Activated CD4-positive, alpha-beta memory T cell treated with anti-CD3 and anti-CD28 coated beads for 36 hours (primary cell): ENCODE measurements at regions of chr10 and their contacts with region 1.

Region 1: GRCh38 chr10:38010119-38010903 is at the start of gene ZNF33A:
- DNase-seq: peak; percentile 95
- H3K4me3 Mint-ChIP-seq: peak within 1 kb of the TSS; percentile 91
- H3K27ac Mint-ChIP-seq: peak within 1 kb of the TSS; percentile 99
- H3K4me1 Mint-ChIP-seq: peaks cover 29% of the 10 kb centered on the region
- H3K27me3 Mint-ChIP-seq: no peaks in the 10 kb centered on the region
- total RNA-seq, gene ZNF33A: 20.8 to 21.5 TPM

Region 2: DNA sequence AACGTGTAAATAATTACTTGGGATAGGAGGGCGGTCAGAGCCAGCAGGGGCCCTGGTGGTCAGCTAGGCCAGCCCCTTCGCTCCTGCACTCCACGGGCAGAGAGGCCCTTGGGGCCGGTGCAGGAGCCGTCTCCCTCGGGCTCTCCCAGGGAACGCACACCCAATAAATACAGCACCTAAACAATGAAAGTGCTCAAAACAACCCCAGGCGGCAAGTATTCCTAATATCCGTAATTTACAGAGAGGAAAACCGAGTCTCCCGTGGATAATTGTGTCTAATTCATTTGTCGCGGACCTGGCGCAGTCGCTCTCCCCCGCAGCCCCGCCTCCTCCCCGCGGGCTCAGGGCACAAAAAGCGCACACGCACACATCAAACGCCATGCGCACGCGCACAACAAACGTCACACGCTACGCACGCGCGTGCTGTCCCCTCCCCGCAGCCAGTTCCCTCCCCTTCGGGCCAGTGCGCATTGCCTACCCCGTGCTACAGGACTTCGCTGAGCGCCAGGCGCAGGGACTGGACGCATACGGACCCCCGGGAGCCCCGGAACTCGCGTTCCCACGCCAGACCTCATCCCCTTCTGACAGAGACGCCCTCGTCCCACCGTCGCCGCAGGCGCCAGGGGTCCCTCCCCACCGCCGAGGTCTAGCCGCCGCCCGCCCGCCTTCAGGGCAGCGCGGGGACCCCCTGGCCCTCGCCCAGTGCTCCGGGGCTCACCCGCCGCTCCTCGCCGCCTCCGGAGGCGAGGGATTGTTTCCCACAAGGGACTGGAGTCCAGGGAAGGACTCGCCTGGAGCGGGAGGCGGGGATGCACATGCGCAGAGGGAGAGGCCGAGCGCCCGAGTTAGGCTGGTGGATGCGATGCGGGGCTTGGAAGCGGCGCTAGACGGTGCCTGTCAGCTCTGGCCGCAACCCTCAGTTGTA is 152.8 kb before region 1 on chr10 and contains the start of gene ZNF248:
- CTCF ChIA-PET with region 1: no interaction called
- POLR2A ChIA-PET with region 1: no interaction called
- intact Hi-C with region 1: loop called (anchors 1 kb)
- DNase-seq: peak; percentile 95
- H3K4me3 Mint-ChIP-seq: peak within 1 kb of the TSS; percentile 96
- H3K27ac Mint-ChIP-seq: peak within 1 kb of the TSS; percentile 94
- H3K4me1 Mint-ChIP-seq: peaks cover 37% of the 10 kb centered on the region
- H3K27me3 Mint-ChIP-seq: peaks cover 1% of the 10 kb centered on the region
- total RNA-seq, gene ZNF248: 6.1 to 7.4 TPM

Region 3: GRCh38 chr10:37976091-37976879 is 34.0 kb before region 1 on chr10 and contains the start of gene ZNF25:
- CTCF ChIA-PET with region 1: interaction called, 20 read pairs
- POLR2A ChIA-PET with region 1: interaction called, 11 read pairs
- intact Hi-C with region 1: loop called (anchors 1 kb)
- DNase-seq: peak; percentile 99
- H3K4me3 Mint-ChIP-seq: peak within 1 kb of the TSS; percentile 92
- H3K27ac Mint-ChIP-seq: peak within 1 kb of the TSS; percentile 94
- H3K4me1 Mint-ChIP-seq: peaks cover 15% of the 10 kb centered on the region
- H3K27me3 Mint-ChIP-seq: no peaks in the 10 kb centered on the region
- total RNA-seq, gene ZNF25: 7.4 to 8.8 TPM

Region 4: DNA sequence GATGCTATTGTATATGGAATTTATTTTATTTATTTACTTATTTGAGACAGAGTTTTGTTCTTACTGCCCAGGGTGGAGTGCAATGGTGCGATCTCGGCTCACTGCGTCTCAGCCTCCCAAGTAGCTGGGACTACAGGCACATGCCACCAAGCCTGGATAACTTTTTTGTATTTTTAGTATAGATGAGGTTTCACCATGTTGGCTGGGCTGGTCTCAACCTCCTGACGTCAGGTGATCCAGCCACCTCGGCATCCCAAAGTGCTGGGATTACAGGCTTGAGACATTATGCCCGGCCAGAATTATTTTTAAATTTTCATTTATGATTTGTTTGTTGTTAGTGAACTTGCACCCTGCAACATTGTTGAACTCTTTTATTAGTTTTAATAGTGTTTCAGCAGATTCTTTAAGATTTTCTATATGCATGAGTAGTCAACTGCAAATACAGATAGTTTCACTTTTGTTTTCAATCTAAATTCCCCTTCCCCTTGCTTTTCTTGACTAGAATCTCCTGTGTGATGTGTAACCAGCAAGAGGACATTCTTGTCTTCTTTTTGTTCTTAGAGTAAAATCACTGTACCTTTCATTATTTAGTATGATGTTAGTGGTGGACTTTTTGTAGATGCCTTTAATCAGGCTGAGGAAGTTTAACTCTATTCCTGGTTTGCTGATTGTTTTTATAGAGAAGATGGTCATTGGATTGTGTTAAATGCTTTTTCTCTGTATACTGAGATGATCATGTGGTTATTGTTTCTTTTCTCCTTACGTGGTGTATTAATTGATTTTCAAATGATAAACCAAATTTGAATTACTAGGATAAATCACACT is 28.0 kb after region 1 on chr10:
- CTCF ChIA-PET with region 1: no interaction called
- POLR2A ChIA-PET with region 1: no interaction called
- intact Hi-C with region 1: loop called (anchors 1 kb)
- DNase-seq: peak; percentile 13
- H3K4me3 Mint-ChIP-seq: peak overlapping the region; percentile 75
- H3K27ac Mint-ChIP-seq: peak overlapping the region; percentile 92
- H3K4me1 Mint-ChIP-seq: peaks cover 36% of the 10 kb centered on the region
- H3K27me3 Mint-ChIP-seq: no peaks in the 10 kb centered on the region